AG04450 (cell line): ENCODE measurements at regions of chr20 and their contacts with region 1.

Region 1: DNA sequence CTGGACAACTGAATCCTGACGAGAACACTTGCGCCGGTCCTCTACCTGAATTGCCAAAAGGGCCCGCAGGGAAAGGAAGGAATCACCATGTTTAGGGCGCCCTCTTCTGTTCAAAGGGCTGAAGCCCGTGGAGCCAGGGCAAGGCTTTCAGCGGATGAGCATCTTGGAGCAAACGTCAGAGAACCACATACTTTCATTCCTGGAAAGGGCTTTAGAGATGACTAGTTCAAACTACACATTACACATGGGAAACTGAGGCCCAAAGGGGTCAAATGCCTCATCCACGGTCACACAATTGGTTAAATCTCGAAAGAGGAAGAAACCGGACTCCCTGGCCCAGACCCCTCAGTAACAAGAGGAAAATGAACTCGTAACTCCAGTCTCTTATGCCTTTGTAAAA is 11.5 kb upstream of the ZNF133 start:
- DNase-seq: peak; percentile 27
- H3K4me3 ChIP-seq: no peak overlapping the region
- H3K27ac ChIP-seq: peak overlapping the region; percentile 31
- H3K27me3 ChIP-seq: peaks cover 5% of the 10 kb centered on the region
- CTCF ChIP-seq: peak; percentile 89

Region 2: DNA sequence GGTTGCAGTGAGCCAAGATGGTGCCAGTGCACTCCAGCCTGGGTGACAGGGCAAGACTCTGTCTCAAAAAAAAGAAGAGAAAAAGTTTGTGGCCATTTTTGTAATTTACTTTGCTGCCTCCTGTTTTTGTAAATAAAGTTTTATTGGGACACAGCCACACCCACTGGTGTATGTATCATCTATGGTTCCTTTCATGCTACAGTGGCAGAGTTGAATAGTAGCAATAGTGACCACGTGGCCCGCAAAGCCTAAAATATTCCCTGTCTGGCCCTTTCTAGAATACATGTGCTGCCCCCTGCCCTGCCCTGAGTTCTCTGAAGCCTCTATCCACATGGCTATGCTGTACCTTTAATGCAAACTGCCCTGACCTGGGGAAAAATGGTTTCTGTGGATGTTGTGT is 63.8 kb before region 1 on chr20:
- CTCF ChIA-PET with region 1: no interaction called
- POLR2A ChIA-PET with region 1: no interaction called
- DNase-seq: no peak
- H3K4me3 ChIP-seq: no peak overlapping the region
- H3K27ac ChIP-seq: no peak overlapping the region
- H3K27me3 ChIP-seq: no peaks in the 10 kb centered on the region
- CTCF ChIP-seq: no peak

Region 3: GRCh38 chr20:18287546-18287914 is 10.7 kb after region 1 on chr20:
- CTCF ChIA-PET with region 1: interaction called, 15 read pairs
- POLR2A ChIA-PET with region 1: no interaction called
- DNase-seq: no peak
- H3K4me3 ChIP-seq: peak overlapping the region; percentile 90
- H3K27ac ChIP-seq: peak overlapping the region; percentile 88
- H3K27me3 ChIP-seq: peaks cover 3% of the 10 kb centered on the region
- CTCF ChIP-seq: no peak